Activated CD4-positive, alpha-beta memory T cell treated with anti-CD3 and anti-CD28 coated beads for 36 hours (primary cell): ENCODE measurements at regions of chr2 and their contacts with region 1.

Region 1: GRCh38 chr2:160429248-160430000 is 64.2 kb downstream of the RBMS1 start:
- DNase-seq: no peak
- H3K4me3 Mint-ChIP-seq: no peak overlapping the region
- H3K27ac Mint-ChIP-seq: peak overlapping the region; percentile 69
- H3K4me1 Mint-ChIP-seq: peaks cover 58% of the 10 kb centered on the region
- H3K27me3 Mint-ChIP-seq: no peaks in the 10 kb centered on the region

Region 2: GRCh38 chr2:159476329-159476728 is 953.1 kb before region 1 on chr2:
- CTCF ChIA-PET with region 1: no interaction called
- POLR2A ChIA-PET with region 1: no interaction called
- intact Hi-C with region 1: no loop called
- DNase-seq: no peak
- H3K4me3 Mint-ChIP-seq: no peak overlapping the region
- H3K27ac Mint-ChIP-seq: no peak overlapping the region
- H3K4me1 Mint-ChIP-seq: no peaks in the 10 kb centered on the region
- H3K27me3 Mint-ChIP-seq: no peaks in the 10 kb centered on the region

Region 3: GRCh38 chr2:160394153-160394552 is 35.3 kb before region 1 on chr2:
- CTCF ChIA-PET with region 1: no interaction called
- POLR2A ChIA-PET with region 1: no interaction called
- intact Hi-C with region 1: loop called (anchors 5 kb)
- DNase-seq: no peak
- H3K4me3 Mint-ChIP-seq: peak overlapping the region; percentile 25
- H3K27ac Mint-ChIP-seq: peak overlapping the region; percentile 64
- H3K4me1 Mint-ChIP-seq: peaks cover 58% of the 10 kb centered on the region
- H3K27me3 Mint-ChIP-seq: no peaks in the 10 kb centered on the region

Region 4: GRCh38 chr2:160417745-160418397 is 11.6 kb before region 1 on chr2:
- CTCF ChIA-PET with region 1: interaction called, 15 read pairs
- POLR2A ChIA-PET with region 1: no interaction called
- intact Hi-C with region 1: loop called (anchors 1 kb)
- DNase-seq: peak; percentile 52
- H3K4me3 Mint-ChIP-seq: peak overlapping the region; percentile 31
- H3K27ac Mint-ChIP-seq: peak overlapping the region; percentile 82
- H3K4me1 Mint-ChIP-seq: peaks cover 63% of the 10 kb centered on the region
- H3K27me3 Mint-ChIP-seq: no peaks in the 10 kb centered on the region

Region 5: DNA sequence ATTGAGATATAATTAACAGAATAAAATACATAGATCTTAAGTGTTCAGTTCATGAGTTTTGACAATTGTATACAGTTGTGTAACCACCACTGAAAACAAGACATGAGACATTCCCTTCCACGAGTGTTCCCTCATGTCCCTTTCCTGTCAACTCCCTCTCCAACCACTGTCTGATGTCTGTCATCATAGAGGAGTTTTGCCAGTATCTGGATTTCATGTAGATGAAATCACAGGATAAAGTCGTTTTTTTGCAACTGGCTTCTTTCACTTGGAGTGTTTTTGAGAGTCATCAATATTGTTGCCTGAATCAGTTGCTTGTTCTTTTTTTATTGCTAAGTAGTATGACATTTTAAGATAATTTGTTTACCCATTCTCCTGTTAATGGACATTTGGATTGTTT is 11.5 kb after region 1 on chr2:
- CTCF ChIA-PET with region 1: no interaction called
- POLR2A ChIA-PET with region 1: no interaction called
- intact Hi-C with region 1: no loop called
- DNase-seq: no peak
- H3K4me3 Mint-ChIP-seq: no peak overlapping the region
- H3K27ac Mint-ChIP-seq: no peak overlapping the region
- H3K4me1 Mint-ChIP-seq: peaks cover 7% of the 10 kb centered on the region
- H3K27me3 Mint-ChIP-seq: no peaks in the 10 kb centered on the region

Region 6: GRCh38 chr2:160472839-160473251 is 43.4 kb after region 1 on chr2:
- CTCF ChIA-PET with region 1: interaction called, 3 read pairs
- POLR2A ChIA-PET with region 1: no interaction called
- intact Hi-C with region 1: loop called (anchors 2 kb)
- DNase-seq: no peak
- H3K4me3 Mint-ChIP-seq: no peak overlapping the region
- H3K27ac Mint-ChIP-seq: peak overlapping the region; percentile 54
- H3K4me1 Mint-ChIP-seq: peaks cover 63% of the 10 kb centered on the region
- H3K27me3 Mint-ChIP-seq: no peaks in the 10 kb centered on the region

Region 7: DNA sequence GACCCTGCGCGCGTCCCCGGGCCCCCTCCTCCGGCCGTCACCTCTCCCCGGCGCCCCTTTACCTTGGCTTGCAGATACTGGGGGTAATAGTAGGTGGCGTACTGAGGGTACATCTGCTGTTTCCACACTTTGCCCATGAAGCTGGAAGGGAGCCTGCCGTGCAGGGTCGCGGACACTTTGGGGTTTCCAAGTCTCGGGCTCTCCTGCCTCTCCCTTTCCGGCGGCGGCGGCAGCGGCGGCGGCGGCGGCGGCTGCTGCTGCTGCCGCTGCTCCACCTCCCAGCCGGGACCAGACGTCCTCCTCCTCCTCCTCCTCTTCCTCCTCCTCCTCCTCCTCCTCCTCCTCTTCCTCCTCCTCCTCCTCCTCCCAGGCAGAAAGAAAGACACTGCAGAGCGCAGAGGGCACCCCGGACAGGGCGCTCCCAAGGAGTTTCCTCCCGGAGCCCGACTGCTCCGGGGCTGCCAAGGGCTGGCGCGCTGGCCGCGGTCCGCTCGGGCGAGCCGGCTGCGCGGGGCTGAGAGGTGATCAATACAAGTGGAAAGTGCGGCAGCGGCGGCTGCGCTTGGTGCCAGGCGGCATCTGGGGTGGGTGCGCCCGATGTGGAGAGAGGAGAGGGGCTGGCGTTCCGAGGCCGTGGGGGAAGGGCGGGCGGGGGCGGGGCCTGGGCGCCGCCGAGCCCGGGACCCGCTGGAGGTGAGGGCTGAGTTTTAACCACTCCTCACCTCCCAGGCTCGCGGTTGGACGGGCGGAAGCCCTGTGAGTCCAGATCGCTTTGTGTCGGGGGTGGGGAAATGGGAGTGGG is 64.0 kb after region 1 on chr2 and contains the start of gene RBMS1:
- CTCF ChIA-PET with region 1: interaction called, 11 read pairs
- POLR2A ChIA-PET with region 1: no interaction called
- intact Hi-C with region 1: loop called (anchors 1 kb)
- DNase-seq: peak; percentile 59
- H3K4me3 Mint-ChIP-seq: peak within 1 kb of the TSS; percentile 95
- H3K27ac Mint-ChIP-seq: peak within 1 kb of the TSS; percentile 93
- H3K4me1 Mint-ChIP-seq: peaks cover 36% of the 10 kb centered on the region
- H3K27me3 Mint-ChIP-seq: no peaks in the 10 kb centered on the region
- total RNA-seq, gene RBMS1: 37.9 to 40.0 TPM